H1 (cell line): ENCODE measurements at regions of chr12 and their contacts with region 1.

Region 1: GRCh38 chr12:33427072-33427471 is 12.5 kb downstream of the SYT10 start:
- DNase-seq: no peak
- H3K4me3 ChIP-seq: no peak overlapping the region
- H3K27ac ChIP-seq: no peak overlapping the region
- H3K4me1 ChIP-seq: no peaks in the 10 kb centered on the region
- H3K27me3 ChIP-seq: no peaks in the 10 kb centered on the region
- CTCF ChIP-seq: peak; percentile 12 to 80 (median 47)
- EP300 ChIP-seq: no peak
- POLR2A ChIP-seq: no peak
- RAD21 ChIP-seq: peak; percentile 80 to 84

Region 2: DNA sequence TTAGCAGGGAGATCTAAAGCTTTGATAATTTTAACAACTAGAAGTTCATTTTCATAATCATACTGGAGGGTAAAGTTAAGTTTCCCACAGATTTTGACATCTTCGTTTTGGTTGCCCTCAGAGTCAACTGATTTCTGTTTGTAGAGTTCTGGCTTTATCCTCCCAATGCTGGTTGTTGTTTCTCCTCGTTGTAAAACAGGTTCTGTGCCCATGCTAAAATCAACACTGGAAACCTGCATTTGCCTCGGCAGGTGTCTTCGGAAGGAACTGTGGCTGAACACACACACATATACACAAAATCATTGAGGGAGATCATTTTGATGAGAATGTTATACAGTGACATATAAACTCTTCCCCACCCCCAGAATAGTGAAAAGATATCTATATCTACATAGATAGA is 20.0 kb before region 1 on chr12:
- CTCF ChIA-PET with region 1: interaction called, 10 read pairs
- POLR2A ChIA-PET with region 1: no interaction called
- DNase-seq: no peak
- H3K4me3 ChIP-seq: no peak overlapping the region
- H3K27ac ChIP-seq: no peak overlapping the region
- H3K4me1 ChIP-seq: no peaks in the 10 kb centered on the region
- H3K27me3 ChIP-seq: no peaks in the 10 kb centered on the region
- CTCF ChIP-seq: no peak
- EP300 ChIP-seq: no peak
- POLR2A ChIP-seq: no peak
- RAD21 ChIP-seq: no peak

Region 3: DNA sequence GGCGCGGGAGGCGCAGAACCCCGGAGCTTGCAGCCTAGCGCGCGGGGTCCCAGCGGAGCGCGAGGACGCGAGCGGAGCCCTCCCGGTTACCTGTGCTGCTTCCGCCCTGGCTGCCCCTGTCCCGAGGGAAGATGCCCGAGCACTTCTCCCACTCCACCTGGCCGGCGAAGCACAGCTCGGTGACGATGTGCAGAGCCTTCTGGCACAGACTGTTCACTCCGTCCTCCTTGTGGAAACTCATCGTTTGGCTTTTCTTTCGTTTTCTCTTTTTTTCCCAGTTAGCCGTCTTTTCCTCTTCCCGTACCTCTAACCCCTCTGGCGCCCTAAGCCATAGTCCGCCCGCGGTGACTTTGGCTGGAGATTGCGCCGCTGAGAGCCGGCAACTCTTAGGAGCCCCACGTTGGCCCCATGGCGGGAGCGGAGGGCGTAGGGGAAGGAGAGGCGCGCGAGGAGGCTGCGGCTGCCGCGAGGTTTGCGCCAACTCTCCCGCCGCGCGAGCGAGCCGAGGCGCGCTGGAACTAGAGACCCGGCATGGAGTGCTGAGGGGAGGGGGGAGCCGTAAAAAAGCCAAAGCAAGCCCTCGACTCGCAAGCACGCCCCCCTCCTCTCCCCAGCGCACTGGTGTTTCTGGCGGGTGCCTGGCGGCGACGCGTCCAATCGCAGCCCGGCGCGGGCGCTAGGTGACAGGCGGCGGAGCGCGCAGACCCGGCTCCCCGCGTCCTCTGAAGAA is 12.4 kb after region 1 on chr12 and contains the start of gene SYT10:
- CTCF ChIA-PET with region 1: interaction called, 11 read pairs
- POLR2A ChIA-PET with region 1: no interaction called
- DNase-seq: peak in 1 of 2 experiments; percentile 80
- H3K4me3 ChIP-seq: peak within 1 kb of the TSS; percentile 58 to 78 (median 73)
- H3K27ac ChIP-seq: no peak within 1 kb of the TSS
- H3K4me1 ChIP-seq: peaks cover 0 to 6% (median 0%) of the 10 kb centered on the region in 4 experiments; a peak in 2 of 7 replicates
- H3K27me3 ChIP-seq: peaks cover 8 to 32% (median 25%) of the 10 kb centered on the region in 4 experiments
- CTCF ChIP-seq: no peak; a peak in 1 of 4 replicates
- EP300 ChIP-seq: no peak
- POLR2A ChIP-seq: 0 out of 3 replicates have a peak, but pooled peaks of 1 of the 2 experiments have one; percentile 46
- RAD21 ChIP-seq: peak in 1 of 2 experiments; percentile 2; a peak in 1 of 4 replicates
- total RNA-seq, gene SYT10: 2.6 and 3.2 TPM in 2 replicates